ENCODE measurements at regions of chr16 and their contacts with region 1.

Region 1: DNA sequence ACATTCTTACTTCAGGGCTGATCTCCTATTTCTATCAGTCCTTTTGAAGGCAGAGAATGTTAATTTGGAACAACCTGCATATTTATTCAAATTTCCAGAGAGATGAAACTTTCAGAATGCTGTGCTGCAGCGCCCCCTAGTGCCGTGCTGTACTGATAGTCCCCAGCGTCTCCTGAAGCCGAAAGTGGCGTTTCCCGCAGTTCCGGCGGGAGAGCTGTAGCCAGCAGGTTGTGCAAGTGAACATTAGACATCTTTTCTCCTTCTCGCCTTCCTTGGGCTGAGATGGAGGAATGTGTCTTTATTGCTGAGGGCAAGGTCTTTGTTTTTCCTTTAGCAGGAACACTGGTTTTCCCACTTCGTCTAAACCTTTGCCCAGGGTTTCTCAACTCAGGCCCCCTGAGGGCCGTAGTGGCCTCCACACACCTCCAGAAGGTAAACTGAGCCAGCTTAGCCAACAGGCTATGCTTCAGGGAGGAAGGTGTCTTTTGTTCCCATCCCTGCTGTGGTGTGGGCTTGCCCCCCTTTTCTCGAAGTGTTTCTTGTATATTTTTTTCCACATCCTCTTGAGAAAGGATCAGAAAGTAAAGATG is 26.4 kb downstream of the USP10 start:
- DNase-seq: peak; percentile 66
- H3K4me3 ChIP-seq: peak overlapping the region; percentile 0; the same call in 1 of the 2 replicates
- H3K27ac ChIP-seq: peak overlapping the region; percentile 62
- H3K27me3 ChIP-seq: no peaks in the 10 kb centered on the region
- CTCF ChIP-seq: peak; percentile 93

Region 2: DNA sequence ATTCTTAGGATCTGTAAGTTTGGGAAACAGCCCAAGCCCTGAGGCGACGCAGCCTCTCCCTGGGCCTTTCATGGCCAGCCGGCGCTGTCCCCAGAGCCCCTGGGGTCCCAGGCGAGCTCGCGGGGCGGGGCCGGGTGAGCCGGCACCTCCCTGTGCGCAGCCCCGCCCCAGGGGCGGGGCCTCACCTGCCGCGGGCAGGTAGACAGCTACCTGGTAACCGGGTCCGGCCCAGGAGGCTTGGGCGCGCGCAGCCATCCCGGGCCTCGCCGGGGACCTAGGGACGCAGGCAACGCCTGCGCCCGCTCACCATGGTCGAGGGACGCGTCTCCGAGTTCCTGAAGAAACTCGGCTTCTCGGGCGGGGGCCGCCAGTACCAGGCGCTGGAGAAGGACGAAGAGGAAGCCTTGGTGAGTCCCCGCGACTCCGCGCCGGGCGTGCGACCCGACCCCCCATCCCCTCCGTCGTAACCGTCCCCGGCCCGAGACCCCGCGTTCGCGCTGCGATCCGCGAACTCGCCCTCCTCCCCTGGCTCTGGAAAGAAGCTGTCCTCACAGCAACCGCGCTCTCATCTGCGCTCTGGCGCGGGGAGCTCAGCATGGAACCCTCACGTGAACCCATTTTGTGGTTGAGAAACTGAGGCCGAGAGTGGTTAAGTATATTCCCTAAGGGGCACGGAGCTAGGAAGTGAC is 357.7 kb before region 1 on chr16 and contains the start of gene ATP2C2:
- CTCF ChIA-PET with region 1: no interaction called
- POLR2A ChIA-PET with region 1: no interaction called
- DNase-seq: no peak
- H3K4me3 ChIP-seq: no peak within 1 kb of the TSS
- H3K27ac ChIP-seq: no peak within 1 kb of the TSS
- H3K27me3 ChIP-seq: peaks cover 71% of the 10 kb centered on the region
- CTCF ChIP-seq: no peak
- polyA plus RNA-seq, gene ATP2C2: not detected in 2 replicates

Region 3: GRCh38 chr16:84391151-84392030 is 334.8 kb before region 1 on chr16:
- CTCF ChIA-PET with region 1: no interaction called
- POLR2A ChIA-PET with region 1: no interaction called
- DNase-seq: no peak
- H3K4me3 ChIP-seq: peak overlapping the region; percentile 20; the same call in 1 of the 2 replicates
- H3K27ac ChIP-seq: no peak overlapping the region
- H3K27me3 ChIP-seq: peaks cover 4% of the 10 kb centered on the region
- CTCF ChIP-seq: no peak

Region 4: GRCh38 chr16:84459941-84460405 is 266.2 kb before region 1 on chr16:
- CTCF ChIA-PET with region 1: no interaction called
- POLR2A ChIA-PET with region 1: no interaction called
- DNase-seq: no peak
- H3K4me3 ChIP-seq: no peak overlapping the region
- H3K27ac ChIP-seq: no peak overlapping the region
- H3K27me3 ChIP-seq: no peaks in the 10 kb centered on the region
- CTCF ChIP-seq: no peak

Region 5: GRCh38 chr16:84532291-84532724 is 193.9 kb before region 1 on chr16:
- CTCF ChIA-PET with region 1: interaction called, 10 read pairs
- POLR2A ChIA-PET with region 1: no interaction called
- DNase-seq: peak; percentile 94
- H3K4me3 ChIP-seq: no peak overlapping the region
- H3K27ac ChIP-seq: peak overlapping the region; percentile 98
- H3K27me3 ChIP-seq: no peaks in the 10 kb centered on the region
- CTCF ChIP-seq: no peak

Region 6: DNA sequence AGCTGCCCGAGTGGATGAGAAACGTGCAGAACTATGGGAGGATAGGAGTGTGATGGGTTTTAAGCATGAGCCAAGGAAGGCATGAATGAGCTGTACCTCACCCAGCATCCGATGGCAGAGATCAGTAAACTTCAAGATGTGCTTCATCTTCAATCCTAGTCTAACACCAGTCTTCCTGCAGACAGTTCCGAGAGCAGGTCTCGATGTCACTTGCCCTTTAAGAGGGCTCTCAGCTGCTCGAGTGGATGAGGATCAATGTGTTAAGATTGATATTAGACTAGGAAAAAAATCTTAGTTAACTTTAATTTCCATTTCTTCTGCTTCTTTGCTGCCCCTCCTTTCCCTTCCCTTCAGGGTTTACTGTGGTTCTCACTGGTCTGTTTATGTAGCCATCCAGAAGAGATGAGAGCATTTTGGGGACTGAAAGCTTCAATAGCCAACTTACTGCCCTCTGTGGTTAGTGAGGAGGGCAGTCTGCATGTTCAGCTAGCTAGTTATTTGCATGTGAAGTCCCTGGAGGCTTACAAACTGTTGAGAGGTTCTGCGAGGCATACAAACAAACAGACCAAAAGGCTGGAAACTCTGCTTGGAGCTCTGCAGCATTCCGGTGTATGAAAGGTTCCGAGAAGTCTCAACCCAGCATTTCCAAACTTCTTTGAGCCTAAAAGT is 62.6 kb before region 1 on chr16:
- CTCF ChIA-PET with region 1: interaction called, 10 read pairs
- POLR2A ChIA-PET with region 1: no interaction called
- DNase-seq: no peak
- H3K4me3 ChIP-seq: no peak overlapping the region
- H3K27ac ChIP-seq: no peak overlapping the region
- H3K27me3 ChIP-seq: no peaks in the 10 kb centered on the region
- CTCF ChIP-seq: no peak

Region 7: DNA sequence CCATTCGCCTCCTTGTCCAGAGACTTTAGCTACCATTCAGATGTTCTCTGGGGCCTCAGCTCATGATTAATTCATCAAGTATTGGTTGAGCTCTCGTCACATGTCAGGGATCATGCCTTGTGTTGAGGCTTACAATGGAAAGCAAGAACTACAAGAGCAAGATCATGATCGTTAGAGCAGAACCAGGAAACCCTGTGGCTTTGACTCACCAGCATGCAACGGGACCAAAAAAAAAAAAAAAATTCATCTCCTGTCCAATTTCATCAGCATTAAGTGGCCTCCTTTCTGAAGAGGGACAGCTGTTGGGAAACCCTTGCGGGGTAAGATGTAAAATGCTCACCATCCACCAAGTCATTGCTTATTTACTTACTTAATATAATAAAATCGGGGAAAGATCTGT is 38.5 kb before region 1 on chr16:
- CTCF ChIA-PET with region 1: interaction called, 10 read pairs
- POLR2A ChIA-PET with region 1: no interaction called
- DNase-seq: peak; percentile 67
- H3K4me3 ChIP-seq: no peak overlapping the region
- H3K27ac ChIP-seq: peak overlapping the region; percentile 86
- H3K27me3 ChIP-seq: no peaks in the 10 kb centered on the region
- CTCF ChIP-seq: no peak

Region 8: DNA sequence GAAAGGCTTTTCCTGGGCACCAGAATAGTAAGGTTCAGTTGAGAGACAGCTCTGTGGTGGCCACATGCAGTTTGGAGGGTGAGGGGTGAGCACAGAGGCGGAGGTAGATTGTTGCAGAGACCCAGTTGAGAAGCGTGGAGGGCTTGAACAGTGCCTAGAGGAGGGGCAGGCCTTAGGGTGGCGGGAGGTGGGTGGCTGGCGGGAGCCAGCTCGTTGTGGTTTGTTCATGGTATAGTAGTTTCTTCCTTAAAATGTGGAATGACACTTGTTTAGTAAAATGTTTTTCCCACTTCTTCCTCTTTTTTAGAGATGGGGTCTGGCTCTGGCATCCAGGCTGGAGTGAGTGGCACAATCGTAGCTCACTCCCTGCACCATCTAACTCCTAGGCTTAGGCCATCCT is 12.1 kb before region 1 on chr16:
- CTCF ChIA-PET with region 1: interaction called, 16 read pairs
- POLR2A ChIA-PET with region 1: no interaction called
- DNase-seq: no peak
- H3K4me3 ChIP-seq: no peak overlapping the region
- H3K27ac ChIP-seq: no peak overlapping the region
- H3K27me3 ChIP-seq: no peaks in the 10 kb centered on the region
- CTCF ChIP-seq: no peak

Region 9: GRCh38 chr16:84785843-84786581 is 59.8 kb after region 1 on chr16:
- CTCF ChIA-PET with region 1: no interaction called
- POLR2A ChIA-PET with region 1: no interaction called
- DNase-seq: no peak
- H3K4me3 ChIP-seq: no peak overlapping the region
- H3K27ac ChIP-seq: peak overlapping the region; percentile 11
- H3K27me3 ChIP-seq: no peaks in the 10 kb centered on the region
- CTCF ChIP-seq: no peak

Region 10: GRCh38 chr16:84970447-84971127 is 244.4 kb after region 1 on chr16:
- CTCF ChIA-PET with region 1: interaction called, 11 read pairs
- POLR2A ChIA-PET with region 1: no interaction called
- DNase-seq: peak; percentile 64
- H3K4me3 ChIP-seq: no peak overlapping the region
- H3K27ac ChIP-seq: no peak overlapping the region
- H3K27me3 ChIP-seq: no peaks in the 10 kb centered on the region
- CTCF ChIP-seq: peak; percentile 85